Activated B cell treated with CpG ODN at 0.5 μM for 24 hours (primary cell): ENCODE measurements at regions of chr2 and their contacts with region 1.

Region 1: GRCh38 chr2:170873035-170873692 is 55.9 kb upstream of the GORASP2 start:
- DNase-seq: peak; percentile 49
- ATAC-seq: peak; percentile 76
- H3K4me3 Mint-ChIP-seq: peak overlapping the region; percentile 64
- H3K27ac Mint-ChIP-seq: no peak overlapping the region
- H3K4me1 Mint-ChIP-seq: peaks cover 9% of the 10 kb centered on the region
- H3K27me3 Mint-ChIP-seq: peaks cover 7% of the 10 kb centered on the region
- CTCF ChIP-seq: peak; percentile 94

Region 2: DNA sequence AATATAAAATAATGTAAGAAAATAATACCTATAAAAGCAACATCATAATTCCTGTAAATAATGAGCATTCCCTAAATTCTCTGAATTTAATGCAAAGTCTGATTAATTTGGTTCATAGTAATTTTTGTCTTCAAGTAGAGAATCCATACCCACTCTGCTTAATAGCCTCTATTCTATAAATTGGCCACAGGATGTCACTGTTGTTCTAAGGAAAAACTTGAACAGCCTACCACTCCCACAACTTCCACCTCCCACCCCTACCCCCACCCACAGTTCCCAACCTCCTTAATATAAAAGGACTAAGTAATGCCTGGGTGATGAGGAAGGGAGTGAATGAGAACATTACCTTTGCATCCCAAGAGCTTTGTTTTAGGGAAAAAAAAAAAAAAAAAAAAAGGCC is 1421.1 kb before region 1 on chr2:
- CTCF ChIA-PET with region 1: no interaction called
- POLR2A ChIA-PET with region 1: no interaction called
- intact Hi-C with region 1: loop called (anchors 5 kb)
- DNase-seq: no peak
- ATAC-seq: no peak
- H3K4me3 Mint-ChIP-seq: no peak overlapping the region
- H3K27ac Mint-ChIP-seq: no peak overlapping the region
- H3K4me1 Mint-ChIP-seq: no peaks in the 10 kb centered on the region
- H3K27me3 Mint-ChIP-seq: peaks cover 3% of the 10 kb centered on the region
- CTCF ChIP-seq: no peak

Region 3: DNA sequence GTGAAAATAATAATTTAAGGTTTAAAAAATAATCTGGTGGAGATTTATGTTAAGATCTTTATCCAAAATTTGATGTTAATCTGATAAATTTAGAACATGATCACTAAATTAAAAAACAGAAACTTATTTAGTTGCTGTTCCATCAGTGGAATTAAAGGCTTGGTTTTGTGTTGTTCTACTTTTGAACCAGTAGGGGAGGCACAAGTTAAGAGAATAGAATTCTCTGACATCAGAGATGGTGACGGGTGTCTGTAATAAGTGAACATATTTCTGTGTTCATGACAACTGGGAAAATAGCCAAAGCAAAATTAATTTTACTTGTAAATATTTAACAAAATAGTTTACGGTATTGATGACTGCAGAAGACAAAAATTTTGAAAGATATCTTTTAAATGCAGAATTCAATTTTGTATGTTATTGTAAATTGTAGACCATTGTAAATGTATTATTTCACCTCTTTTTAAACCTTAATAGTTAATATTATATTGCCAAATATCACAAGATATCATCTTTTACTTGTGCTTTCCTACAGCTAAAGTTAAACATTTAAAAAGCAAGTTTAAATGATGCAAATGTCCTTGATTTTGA is 939.9 kb before region 1 on chr2:
- CTCF ChIA-PET with region 1: no interaction called
- POLR2A ChIA-PET with region 1: no interaction called
- intact Hi-C with region 1: loop called (anchors 5 kb)
- DNase-seq: no peak
- ATAC-seq: peak; percentile 52
- H3K4me3 Mint-ChIP-seq: no peak overlapping the region
- H3K27ac Mint-ChIP-seq: no peak overlapping the region
- H3K4me1 Mint-ChIP-seq: no peaks in the 10 kb centered on the region
- H3K27me3 Mint-ChIP-seq: no peaks in the 10 kb centered on the region
- CTCF ChIP-seq: no peak

Region 4: GRCh38 chr2:170258382-170258781 is 614.8 kb before region 1 on chr2:
- CTCF ChIA-PET with region 1: no interaction called
- POLR2A ChIA-PET with region 1: no interaction called
- intact Hi-C with region 1: no loop called
- DNase-seq: no peak
- ATAC-seq: no peak
- H3K4me3 Mint-ChIP-seq: no peak overlapping the region
- H3K27ac Mint-ChIP-seq: no peak overlapping the region
- H3K4me1 Mint-ChIP-seq: no peaks in the 10 kb centered on the region
- H3K27me3 Mint-ChIP-seq: peaks cover 4% of the 10 kb centered on the region
- CTCF ChIP-seq: no peak

Region 5: DNA sequence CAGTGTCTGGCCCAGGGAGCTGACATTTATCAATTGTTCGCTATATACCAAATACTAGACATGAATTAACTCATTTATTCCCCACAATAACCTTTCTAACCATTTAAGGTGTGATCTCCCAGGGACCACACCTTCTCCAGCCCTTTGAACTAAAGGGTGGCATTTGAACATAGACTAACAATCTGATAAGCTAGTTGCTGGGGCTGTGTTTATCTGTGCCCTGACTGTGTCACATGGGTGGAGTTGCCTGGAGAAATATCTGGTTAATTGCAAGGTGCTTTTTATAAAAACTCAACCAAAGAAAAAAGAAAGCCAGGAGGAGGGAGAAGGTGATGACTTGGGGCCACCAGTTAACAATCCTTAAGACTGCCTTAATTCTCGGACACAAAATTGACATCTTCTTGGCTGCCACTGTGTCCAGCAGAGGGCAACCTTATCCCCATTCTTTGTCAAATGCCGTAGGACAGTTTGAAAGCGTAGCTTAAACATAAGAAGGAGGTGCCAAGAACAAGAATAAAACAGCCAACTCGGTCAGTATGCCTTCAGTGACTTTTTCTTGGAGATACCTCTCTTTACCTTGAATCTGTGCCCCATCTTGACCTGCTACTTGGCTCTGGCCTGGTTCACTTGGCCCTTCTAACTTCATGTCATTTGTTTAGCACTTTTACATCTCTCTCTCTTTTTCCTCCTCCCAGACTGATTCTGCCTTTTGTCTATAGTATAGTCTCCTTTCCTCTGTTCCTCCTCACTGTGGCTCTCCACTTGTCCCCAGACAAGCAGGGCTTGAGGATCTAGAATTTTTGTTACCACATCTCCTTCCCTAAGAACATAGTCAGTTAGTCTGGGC is 511.9 kb before region 1 on chr2:
- CTCF ChIA-PET with region 1: interaction called, 4 read pairs
- POLR2A ChIA-PET with region 1: no interaction called
- intact Hi-C with region 1: loop called (anchors 1 kb)
- DNase-seq: no peak
- ATAC-seq: no peak
- H3K4me3 Mint-ChIP-seq: no peak overlapping the region
- H3K27ac Mint-ChIP-seq: no peak overlapping the region
- H3K4me1 Mint-ChIP-seq: no peaks in the 10 kb centered on the region
- H3K27me3 Mint-ChIP-seq: peaks cover 18% of the 10 kb centered on the region
- CTCF ChIP-seq: no peak

Region 6: DNA sequence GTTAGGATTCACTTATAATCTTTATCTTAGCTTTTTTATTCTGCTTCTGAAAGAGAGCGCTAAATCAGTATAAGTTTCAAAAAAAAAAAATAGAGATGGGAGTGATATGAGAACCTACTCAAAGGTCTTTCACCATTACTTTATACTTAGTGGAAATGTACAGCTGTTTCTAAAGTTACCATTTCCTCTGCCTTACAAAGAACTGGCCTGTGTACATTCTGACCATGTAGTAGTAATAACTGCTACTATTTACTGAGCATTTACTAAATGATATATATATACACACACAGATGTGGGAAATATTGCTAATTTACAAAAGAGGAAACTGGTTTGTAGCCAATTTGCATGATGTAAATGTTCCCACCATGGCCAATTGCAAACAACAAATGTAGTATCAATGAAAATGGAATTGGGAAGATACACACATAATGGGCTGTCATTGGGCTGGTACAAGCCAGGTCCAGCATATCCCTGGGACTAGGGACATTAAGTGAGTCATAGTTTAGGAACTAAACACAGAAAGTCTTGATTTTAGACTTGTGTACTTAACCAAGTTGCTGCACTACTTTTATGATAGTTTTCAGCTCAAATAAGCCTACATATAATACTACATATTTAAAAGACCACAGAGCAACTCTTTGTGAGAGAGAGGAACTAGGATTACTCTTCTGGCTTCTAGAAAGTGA is 881.2 kb after region 1 on chr2:
- CTCF ChIA-PET with region 1: no interaction called
- POLR2A ChIA-PET with region 1: no interaction called
- intact Hi-C with region 1: no loop called
- DNase-seq: no peak
- ATAC-seq: no peak
- H3K4me3 Mint-ChIP-seq: no peak overlapping the region
- H3K27ac Mint-ChIP-seq: no peak overlapping the region
- H3K4me1 Mint-ChIP-seq: peaks cover 2% of the 10 kb centered on the region
- H3K27me3 Mint-ChIP-seq: no peaks in the 10 kb centered on the region
- CTCF ChIP-seq: no peak